ENCODE measurements at regions of chr5 and their contacts with region 1.

Region 1: GRCh38 chr5:132064738-132065331 is 4.4 kb downstream of the IL3 start:
- DNase-seq: peak; percentile 40 to 82 (median 64)
- ATAC-seq: peak; percentile 80
- H3K4me3 ChIP-seq: no peak overlapping the region
- H3K4me3 Mint-ChIP-seq: no peak overlapping the region
- H3K27ac ChIP-seq: no peak overlapping the region
- H3K27ac Mint-ChIP-seq: peak overlapping the region in 2 of 9 donors; percentile 30 to 79
- H3K4me1 ChIP-seq: peaks cover 0 to 9% of the 10 kb centered on the region in 2 donors
- H3K4me1 Mint-ChIP-seq: peaks cover 0 to 62% (median 5%) of the 10 kb centered on the region in 7 donors
- H3K27me3 ChIP-seq: no peaks in the 10 kb centered on the region
- H3K27me3 Mint-ChIP-seq: peaks cover 0 to 7% (median 0%) of the 10 kb centered on the region in 5 donors

Region 2: DNA sequence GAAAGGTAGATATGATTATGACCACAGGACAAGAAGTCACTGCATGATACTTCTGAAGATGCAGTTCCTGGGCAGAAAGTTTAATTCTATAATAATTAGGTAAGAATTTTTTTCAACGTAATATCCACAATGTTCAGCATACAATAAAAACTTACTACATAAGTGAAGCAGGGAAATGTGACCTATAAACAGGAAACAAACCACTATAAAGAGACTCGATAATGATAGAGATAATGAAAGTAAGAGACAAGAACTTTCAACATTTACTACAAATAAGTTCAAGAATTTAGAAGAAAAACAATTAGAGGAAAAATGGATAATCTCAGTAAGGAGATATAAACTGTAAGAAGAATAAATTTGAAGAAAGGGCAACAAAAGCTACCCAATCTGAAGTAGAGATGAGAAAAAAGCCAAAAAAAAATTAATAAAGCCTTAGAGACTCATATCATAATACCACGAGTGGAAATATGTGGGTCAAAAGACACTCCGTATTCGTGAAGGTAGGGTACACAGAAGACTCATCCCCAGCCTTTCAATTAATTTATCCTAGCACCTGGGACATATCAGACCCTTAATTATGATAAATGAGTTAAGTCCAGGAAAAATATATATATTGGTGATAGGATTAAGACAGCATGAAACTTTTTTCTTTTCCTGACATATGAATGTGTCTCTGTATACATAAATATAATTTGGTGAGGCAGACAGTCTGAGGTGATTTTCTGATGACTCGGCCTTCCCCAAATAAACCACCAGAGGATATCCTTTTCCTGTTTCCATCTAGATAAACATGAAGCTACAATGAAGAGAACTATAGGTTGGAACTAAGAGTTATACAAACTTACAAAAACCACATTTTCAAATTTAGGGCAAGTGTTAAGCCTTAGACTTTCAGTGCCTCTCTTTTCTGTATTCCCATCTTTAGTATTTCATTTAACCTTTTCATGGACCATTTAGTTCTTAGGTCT is 550.2 kb before region 1 on chr5:
- CTCF ChIA-PET with region 1: no interaction called
- POLR2A ChIA-PET with region 1: no interaction called
- intact Hi-C with region 1: loop called in 1 of 2 experiments (anchors 1 kb)
- DNase-seq: peak in 5 of 9 donors; percentile 24 to 50 (median 47)
- ATAC-seq: peak; percentile 85
- H3K4me3 ChIP-seq: peak overlapping the region; percentile 41
- H3K4me3 Mint-ChIP-seq: peak overlapping the region; percentile 68 to 95 (median 84)
- H3K27ac ChIP-seq: peak overlapping the region; percentile 56
- H3K27ac Mint-ChIP-seq: peak overlapping the region; percentile 63 to 95 (median 88)
- H3K4me1 ChIP-seq: peaks cover 20 to 28% of the 10 kb centered on the region in 2 donors
- H3K4me1 Mint-ChIP-seq: peaks cover 35 to 91% (median 77%) of the 10 kb centered on the region in 7 donors
- H3K27me3 ChIP-seq: no peaks in the 10 kb centered on the region
- H3K27me3 Mint-ChIP-seq: no peaks in the 10 kb centered on the region

Region 3: GRCh38 chr5:131747180-131748105 is 317.4 kb before region 1 on chr5:
- CTCF ChIA-PET with region 1: no interaction called
- POLR2A ChIA-PET with region 1: no interaction called
- intact Hi-C with region 1: loop called in 1 of 2 experiments (anchors 5 kb)
- DNase-seq: peak in 7 of 9 donors; percentile 21 to 64 (median 48)
- ATAC-seq: peak; percentile 80
- H3K4me3 ChIP-seq: no peak overlapping the region
- H3K4me3 Mint-ChIP-seq: peak overlapping the region; percentile 14 to 80 (median 68)
- H3K27ac ChIP-seq: peak overlapping the region; percentile 63
- H3K27ac Mint-ChIP-seq: peak overlapping the region; percentile 84 to 96 (median 89)
- H3K4me1 ChIP-seq: peaks cover 10 to 11% of the 10 kb centered on the region in 2 donors
- H3K4me1 Mint-ChIP-seq: peaks cover 28 to 57% (median 51%) of the 10 kb centered on the region in 7 donors
- H3K27me3 ChIP-seq: no peaks in the 10 kb centered on the region
- H3K27me3 Mint-ChIP-seq: no peaks in the 10 kb centered on the region

Region 4: DNA sequence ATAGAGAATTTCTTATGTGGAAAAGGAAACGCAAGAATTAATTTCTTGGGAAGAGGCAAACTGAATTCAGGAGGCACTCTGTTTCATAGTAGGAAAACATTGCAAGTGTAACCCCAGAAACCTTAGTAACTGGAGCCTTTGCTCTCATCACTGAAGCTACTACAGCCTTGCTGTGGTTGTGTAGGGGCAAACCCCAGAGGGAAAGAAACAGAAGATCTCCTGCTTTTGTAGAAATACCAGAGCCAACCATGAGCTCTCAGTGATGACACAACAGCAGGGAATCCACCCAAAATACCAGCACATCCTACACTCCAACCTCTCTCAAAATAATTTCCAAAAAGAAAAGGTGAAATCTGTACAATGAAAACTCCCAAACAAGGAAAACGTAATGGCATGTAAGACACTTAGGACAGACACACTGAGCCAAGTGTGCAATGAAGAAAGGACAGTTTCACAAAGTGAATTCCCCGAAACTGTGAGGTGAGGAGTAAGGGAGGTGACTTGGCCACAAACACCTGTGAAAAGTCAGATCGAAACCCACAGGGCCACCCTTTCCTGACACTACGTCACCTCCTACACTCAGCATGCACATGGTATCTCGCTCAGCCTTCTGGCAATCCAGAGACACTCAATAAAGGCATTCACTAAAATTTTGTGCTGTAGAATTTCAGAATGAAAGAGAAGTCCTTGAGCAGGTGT is 44.8 kb before region 1 on chr5:
- CTCF ChIA-PET with region 1: no interaction called
- POLR2A ChIA-PET with region 1: no interaction called
- intact Hi-C with region 1: loop called in 1 of 2 experiments (anchors 1 kb)
- DNase-seq: peak in 8 of 9 donors; percentile 37 to 75 (median 57)
- ATAC-seq: peak; percentile 95
- H3K4me3 ChIP-seq: no peak overlapping the region
- H3K4me3 Mint-ChIP-seq: peak overlapping the region in 7 of 10 donors; percentile 35 to 81 (median 53)
- H3K27ac ChIP-seq: peak overlapping the region; percentile 46
- H3K27ac Mint-ChIP-seq: peak overlapping the region; percentile 38 to 95 (median 69)
- H3K4me1 ChIP-seq: peaks cover 19 to 24% of the 10 kb centered on the region in 2 donors
- H3K4me1 Mint-ChIP-seq: peaks cover 10 to 54% (median 43%) of the 10 kb centered on the region in 7 donors
- H3K27me3 ChIP-seq: no peaks in the 10 kb centered on the region
- H3K27me3 Mint-ChIP-seq: peaks cover 0 to 45% (median 0%) of the 10 kb centered on the region in 5 donors

Region 5: GRCh38 chr5:132180134-132180745 is 115.4 kb after region 1 on chr5:
- CTCF ChIA-PET with region 1: no interaction called
- POLR2A ChIA-PET with region 1: no interaction called
- intact Hi-C with region 1: loop called (anchors 1 to 10 kb)
- DNase-seq: peak in 4 of 9 donors; percentile 4 to 19 (median 6)
- ATAC-seq: peak; percentile 24
- H3K4me3 ChIP-seq: no peak overlapping the region
- H3K4me3 Mint-ChIP-seq: peak overlapping the region in 1 of 10 donors; percentile 23
- H3K27ac ChIP-seq: no peak overlapping the region
- H3K27ac Mint-ChIP-seq: peak overlapping the region in 1 of 9 donors; percentile 65
- H3K4me1 ChIP-seq: peaks cover 0 to 4% of the 10 kb centered on the region in 2 donors
- H3K4me1 Mint-ChIP-seq: peaks cover 16 to 40% (median 19%) of the 10 kb centered on the region in 7 donors
- H3K27me3 ChIP-seq: no peaks in the 10 kb centered on the region
- H3K27me3 Mint-ChIP-seq: peaks cover 0 to 4% (median 0%) of the 10 kb centered on the region in 5 donors

Measured in naive thymus-derived CD4-positive, alpha-beta T cell (primary cell).